ENCODE measurements at regions of chr20 and their contacts with region 1.

Region 1: GRCh38 chr20:32031007-32031958 is 20.8 kb upstream of the HCK start:
- DNase-seq: peak; percentile 67
- ATAC-seq: peak; percentile 79
- H3K4me3 Mint-ChIP-seq: no peak overlapping the region
- H3K27ac Mint-ChIP-seq: no peak overlapping the region
- H3K4me1 Mint-ChIP-seq: no peaks in the 10 kb centered on the region
- H3K27me3 Mint-ChIP-seq: peaks cover 42% of the 10 kb centered on the region

Region 2: DNA sequence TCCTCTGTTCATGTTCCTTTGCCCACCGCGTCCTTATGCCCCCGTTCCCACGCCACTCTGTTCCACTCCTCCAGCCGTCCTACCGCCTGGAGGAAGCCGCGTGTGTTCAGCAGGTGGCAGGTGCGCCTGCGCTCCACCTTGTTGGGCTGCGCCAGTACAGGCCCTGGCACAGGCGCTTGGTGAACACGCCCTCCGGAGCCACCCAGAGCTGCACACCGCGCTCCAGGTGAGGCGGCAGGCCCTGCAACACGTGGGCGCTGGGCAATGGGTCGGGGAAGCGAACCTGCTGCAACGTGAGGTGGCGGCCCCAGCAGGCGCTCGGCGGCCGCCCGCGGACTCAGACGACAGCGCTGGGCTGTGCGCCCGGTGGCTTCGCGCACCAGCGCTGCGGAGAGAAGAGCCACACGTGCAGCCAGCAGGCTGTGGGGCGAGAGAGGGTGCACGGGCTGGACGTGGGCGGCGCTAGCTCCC is 181.8 kb before region 1 on chr20:
- CTCF ChIA-PET with region 1: interaction called, 33 read pairs
- DNase-seq: no peak
- ATAC-seq: no peak
- H3K4me3 Mint-ChIP-seq: no peak overlapping the region
- H3K27ac Mint-ChIP-seq: no peak overlapping the region
- H3K4me1 Mint-ChIP-seq: no peaks in the 10 kb centered on the region
- H3K27me3 Mint-ChIP-seq: peaks cover 23% of the 10 kb centered on the region

Region 3: DNA sequence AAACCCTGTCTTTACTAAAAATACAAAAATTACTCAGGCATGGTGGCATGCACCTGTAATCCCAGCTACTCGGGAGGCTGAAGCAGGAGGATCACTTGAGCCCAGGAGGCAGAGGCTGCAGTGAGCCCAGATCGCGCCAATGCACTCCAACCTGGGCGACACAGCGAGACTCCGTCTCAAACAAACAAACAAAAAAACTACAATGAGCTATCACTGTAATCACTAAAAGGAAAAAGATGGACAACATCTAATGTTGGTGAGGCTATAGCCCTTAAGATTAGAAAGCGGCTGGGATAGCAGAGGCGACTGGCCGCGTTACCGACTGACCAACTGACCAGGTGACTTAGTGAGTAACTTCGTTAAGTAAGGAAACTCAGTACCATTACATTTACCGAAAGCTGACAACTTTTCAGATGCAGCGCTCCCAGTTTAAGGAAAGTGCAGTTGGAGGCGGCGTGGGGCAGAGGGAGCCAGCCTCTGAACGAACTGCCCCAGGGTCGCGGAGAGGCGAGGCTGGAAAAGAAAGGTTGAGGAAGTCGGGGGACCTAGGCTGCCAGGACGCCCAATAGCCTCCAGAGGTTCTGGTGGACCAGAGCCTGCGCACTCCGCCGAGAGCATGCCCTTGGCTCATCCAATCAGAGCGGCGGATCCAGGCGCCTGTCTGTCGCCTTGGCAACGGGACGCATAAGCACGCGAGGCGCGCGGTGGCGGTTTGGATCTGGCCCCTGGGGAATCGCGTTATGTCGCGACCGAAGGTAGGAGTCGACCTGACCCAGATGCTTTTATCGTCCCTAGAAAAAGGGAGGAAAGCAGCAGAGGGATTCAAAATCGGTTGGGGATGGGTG is 151.9 kb before region 1 on chr20:
- CTCF ChIA-PET with region 1: interaction called, 15 read pairs
- DNase-seq: peak; percentile 89
- ATAC-seq: peak; percentile 97
- H3K4me3 Mint-ChIP-seq: peak overlapping the region; percentile 81
- H3K27ac Mint-ChIP-seq: peak overlapping the region; percentile 49
- H3K4me1 Mint-ChIP-seq: peaks cover 15% of the 10 kb centered on the region
- H3K27me3 Mint-ChIP-seq: peaks cover 36% of the 10 kb centered on the region

Region 4: DNA sequence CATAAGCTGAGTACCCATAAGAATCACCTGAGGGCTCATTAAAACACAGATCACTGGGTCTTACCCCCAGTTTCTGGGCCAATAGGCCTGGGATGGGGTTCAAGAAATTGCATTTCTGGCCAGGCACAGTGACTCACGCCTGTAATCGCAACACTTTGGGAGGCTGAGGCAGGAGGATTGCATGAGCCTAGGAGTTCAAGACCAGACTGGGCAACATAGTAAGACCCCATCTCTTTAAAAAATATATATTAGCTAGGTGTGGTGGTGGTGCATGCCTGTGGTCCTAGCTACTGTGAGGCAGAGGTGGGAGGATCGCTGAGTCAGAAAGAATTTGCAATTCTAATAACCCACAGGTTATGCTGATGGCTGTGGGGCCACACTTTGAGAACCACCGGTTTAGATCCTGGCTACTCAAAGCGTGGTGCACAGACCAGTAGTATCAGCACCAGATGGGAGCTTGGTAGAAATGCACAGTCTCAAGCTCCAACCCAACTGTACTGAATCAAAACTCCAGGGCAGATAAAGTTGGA is 19.1 kb before region 1 on chr20:
- CTCF ChIA-PET with region 1: interaction called, 18 read pairs
- DNase-seq: no peak
- ATAC-seq: no peak
- H3K4me3 Mint-ChIP-seq: no peak overlapping the region
- H3K27ac Mint-ChIP-seq: no peak overlapping the region
- H3K4me1 Mint-ChIP-seq: peaks cover 8% of the 10 kb centered on the region
- H3K27me3 Mint-ChIP-seq: peaks cover 26% of the 10 kb centered on the region

Region 5: GRCh38 chr20:32052090-32052777 is 21.0 kb after region 1 on chr20 and contains the start of gene HCK:
- CTCF ChIA-PET with region 1: interaction called, 12 read pairs
- DNase-seq: no peak
- ATAC-seq: peak; percentile 60
- H3K4me3 Mint-ChIP-seq: no peak within 1 kb of the TSS
- H3K27ac Mint-ChIP-seq: no peak within 1 kb of the TSS
- H3K4me1 Mint-ChIP-seq: peaks cover 17% of the 10 kb centered on the region
- H3K27me3 Mint-ChIP-seq: peaks cover 71% of the 10 kb centered on the region
- total RNA-seq, gene HCK: not detected

Measured in activated CD8-positive, alpha-beta memory T cell treated with anti-CD3 and anti-CD28 coated beads, Interleukin-2, amount 10 ng/mL, durations not matched to agents 7 days and 5 days (primary cell).